ENCODE measurements at regions of chr7 and their contacts with region 1.

Region 1: DNA sequence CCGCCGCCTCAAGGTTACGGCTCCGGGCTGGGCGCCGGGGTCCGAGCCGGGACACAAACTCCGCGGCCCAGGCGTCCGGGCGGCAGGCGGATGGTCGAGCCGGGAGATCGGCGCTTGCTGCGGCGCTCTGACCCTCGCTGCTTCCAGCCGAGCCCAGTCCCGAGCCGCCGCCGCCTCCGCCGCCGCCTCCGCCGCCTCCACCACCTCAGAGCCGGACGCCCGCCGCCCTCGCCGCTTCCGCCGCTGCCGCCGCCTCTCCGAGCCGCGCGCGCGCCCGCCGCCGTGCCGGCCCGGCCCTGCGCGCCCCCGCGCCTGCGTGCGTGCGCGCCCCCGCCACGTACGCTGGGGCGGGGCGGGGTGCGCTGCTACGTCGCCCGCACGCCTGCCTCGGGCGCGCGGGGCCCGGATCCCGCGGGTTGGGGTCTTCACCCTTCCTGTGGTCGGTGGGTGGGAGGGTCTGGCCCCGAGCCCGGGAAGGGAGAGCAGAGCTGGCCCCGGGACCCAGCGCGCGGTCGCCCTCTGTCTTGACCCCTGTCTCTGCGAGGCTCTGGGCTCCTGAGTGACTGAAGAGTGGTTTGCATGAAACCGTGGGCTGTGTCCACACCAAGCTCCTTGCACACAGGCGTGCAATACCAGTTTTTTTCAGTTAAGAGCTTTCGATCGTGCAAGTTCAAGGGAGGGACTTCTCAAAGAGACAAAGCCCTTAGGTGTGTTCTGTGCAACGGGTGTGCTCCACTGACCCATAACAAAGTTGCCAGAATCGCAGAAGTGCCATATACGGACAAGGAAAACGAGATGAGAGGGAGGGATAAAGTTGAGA is at the start of gene SMURF1:
- DNase-seq: peak; percentile 75 to 86
- ATAC-seq: peak; percentile 72 to 79 (median 78)
- H3K4me3 ChIP-seq: peak within 1 kb of the TSS; percentile 99
- H3K27ac ChIP-seq: peak within 1 kb of the TSS; percentile 93
- H3K4me1 ChIP-seq: peaks cover 19% of the 10 kb centered on the region
- H3K27me3 ChIP-seq: no peaks in the 10 kb centered on the region
- CTCF ChIP-seq: no peak
- total RNA-seq, gene SMURF1: 8.8 to 16.9 (median 13.2) TPM

Region 2: DNA sequence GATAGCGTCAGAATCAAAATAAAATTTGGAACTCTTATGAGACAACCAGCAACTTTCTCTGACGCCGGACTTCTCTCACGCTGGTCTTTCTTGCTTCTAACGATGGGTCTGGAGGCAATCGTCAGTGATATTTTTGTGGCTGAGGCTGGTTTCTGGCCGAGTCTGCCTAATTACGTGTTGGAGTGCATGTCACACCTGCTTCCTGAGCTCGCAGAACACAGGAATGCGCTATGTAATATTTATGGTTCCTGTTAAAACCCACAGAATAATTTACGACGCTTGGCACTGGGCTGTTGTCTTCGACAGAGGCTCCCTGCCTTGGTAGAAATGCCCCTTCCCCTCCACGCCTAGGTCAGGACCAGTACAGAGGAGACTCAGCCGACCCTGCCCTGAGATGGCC is 462.1 kb before region 1 on chr7:
- intact Hi-C with region 1: no loop called
- DNase-seq: no peak
- ATAC-seq: no peak
- H3K4me3 ChIP-seq: no peak overlapping the region
- H3K27ac ChIP-seq: no peak overlapping the region
- H3K4me1 ChIP-seq: no peaks in the 10 kb centered on the region
- H3K27me3 ChIP-seq: no peaks in the 10 kb centered on the region
- CTCF ChIP-seq: no peak

Region 3: DNA sequence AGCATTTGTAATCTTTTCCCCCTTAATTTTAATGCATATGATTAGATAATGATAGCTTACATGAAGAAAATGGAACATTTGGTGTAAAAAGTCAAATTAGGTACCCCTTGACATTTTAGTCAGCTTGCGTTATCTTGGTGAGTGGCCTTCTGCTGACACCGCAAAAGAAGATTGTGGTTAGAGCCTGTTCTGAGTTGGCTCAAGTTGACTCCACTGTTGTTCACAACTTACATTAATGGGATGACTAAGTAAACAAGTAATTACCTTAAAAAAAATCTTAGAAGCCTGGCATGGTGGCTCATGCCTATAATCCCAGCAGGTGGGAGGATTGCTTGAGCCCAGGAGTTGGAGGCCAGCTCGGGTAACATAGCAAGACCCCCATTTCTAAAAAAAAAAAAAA is 241.5 kb before region 1 on chr7:
- intact Hi-C with region 1: no loop called
- DNase-seq: no peak
- ATAC-seq: no peak
- H3K4me3 ChIP-seq: no peak overlapping the region
- H3K27ac ChIP-seq: no peak overlapping the region
- H3K4me1 ChIP-seq: peaks cover 5% of the 10 kb centered on the region
- H3K27me3 ChIP-seq: no peaks in the 10 kb centered on the region
- CTCF ChIP-seq: no peak

Region 4: GRCh38 chr7:99029466-99030435 is 114.3 kb before region 1 on chr7:
- intact Hi-C with region 1: no loop called
- DNase-seq: no peak
- ATAC-seq: no peak
- H3K4me3 ChIP-seq: no peak overlapping the region
- H3K27ac ChIP-seq: peak overlapping the region; percentile 60
- H3K4me1 ChIP-seq: no peaks in the 10 kb centered on the region
- H3K27me3 ChIP-seq: no peaks in the 10 kb centered on the region
- CTCF ChIP-seq: no peak

Region 5: DNA sequence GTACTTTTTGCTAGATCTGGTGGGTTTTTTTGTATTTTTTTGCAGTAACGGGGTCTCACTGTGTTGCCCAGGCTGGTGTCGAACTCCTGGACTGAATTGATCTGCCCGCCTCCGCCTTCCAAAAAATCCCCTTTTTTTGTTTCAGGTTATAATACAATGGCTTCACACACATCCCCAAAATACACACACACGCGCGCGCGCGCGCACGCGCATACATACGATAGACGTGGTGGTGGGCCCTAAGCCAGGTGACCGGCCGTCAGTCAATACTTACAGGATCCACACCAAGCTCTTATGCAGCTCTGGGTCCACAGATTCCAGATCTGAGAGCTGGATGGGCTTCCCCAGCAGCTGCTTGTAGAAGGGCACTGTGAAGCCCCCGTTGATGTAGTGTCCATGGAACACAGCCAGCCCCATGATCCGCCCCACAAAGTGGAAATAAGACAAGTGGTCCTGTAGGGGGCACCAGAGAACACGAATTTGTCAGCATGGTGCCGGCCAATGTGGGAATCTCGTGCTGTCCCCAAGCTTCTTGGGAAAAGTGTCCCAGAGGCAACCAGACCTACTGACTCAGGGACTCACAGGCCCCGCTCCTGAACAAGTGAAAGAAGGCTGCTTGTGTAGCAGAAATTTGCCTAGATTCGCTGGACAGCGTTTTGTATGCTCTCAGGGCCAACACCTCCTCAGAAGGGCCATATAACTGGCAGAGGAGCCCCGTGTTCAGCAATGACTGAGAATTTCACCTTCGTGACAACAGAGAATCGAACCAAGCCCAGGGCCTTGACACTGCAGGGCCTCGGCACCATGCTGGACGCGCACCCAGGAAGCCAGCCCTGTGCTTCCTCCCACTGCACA is 103.7 kb before region 1 on chr7:
- intact Hi-C with region 1: loop called in 1 of 2 experiments (anchors 5 kb)
- DNase-seq: peak; percentile 77 to 87
- ATAC-seq: peak; percentile 79 to 91 (median 86)
- H3K4me3 ChIP-seq: no peak overlapping the region
- H3K27ac ChIP-seq: peak overlapping the region; percentile 47
- H3K4me1 ChIP-seq: no peaks in the 10 kb centered on the region
- H3K27me3 ChIP-seq: no peaks in the 10 kb centered on the region
- CTCF ChIP-seq: peak; percentile 78

Region 6: GRCh38 chr7:99079104-99079503 is 65.0 kb before region 1 on chr7:
- intact Hi-C with region 1: loop called in 1 of 2 experiments (anchors 5 kb)
- DNase-seq: no peak
- ATAC-seq: peak in 3 of 4 donors; percentile 39 to 74 (median 67)
- H3K4me3 ChIP-seq: no peak overlapping the region
- H3K27ac ChIP-seq: no peak overlapping the region
- H3K4me1 ChIP-seq: peaks cover 15% of the 10 kb centered on the region
- H3K27me3 ChIP-seq: no peaks in the 10 kb centered on the region
- CTCF ChIP-seq: no peak

Region 7: GRCh38 chr7:99170730-99171074 is 26.6 kb after region 1 on chr7:
- intact Hi-C with region 1: no loop called
- DNase-seq: no peak
- ATAC-seq: no peak
- H3K4me3 ChIP-seq: no peak overlapping the region
- H3K27ac ChIP-seq: no peak overlapping the region
- H3K4me1 ChIP-seq: no peaks in the 10 kb centered on the region
- H3K27me3 ChIP-seq: no peaks in the 10 kb centered on the region
- CTCF ChIP-seq: no peak

Region 8: DNA sequence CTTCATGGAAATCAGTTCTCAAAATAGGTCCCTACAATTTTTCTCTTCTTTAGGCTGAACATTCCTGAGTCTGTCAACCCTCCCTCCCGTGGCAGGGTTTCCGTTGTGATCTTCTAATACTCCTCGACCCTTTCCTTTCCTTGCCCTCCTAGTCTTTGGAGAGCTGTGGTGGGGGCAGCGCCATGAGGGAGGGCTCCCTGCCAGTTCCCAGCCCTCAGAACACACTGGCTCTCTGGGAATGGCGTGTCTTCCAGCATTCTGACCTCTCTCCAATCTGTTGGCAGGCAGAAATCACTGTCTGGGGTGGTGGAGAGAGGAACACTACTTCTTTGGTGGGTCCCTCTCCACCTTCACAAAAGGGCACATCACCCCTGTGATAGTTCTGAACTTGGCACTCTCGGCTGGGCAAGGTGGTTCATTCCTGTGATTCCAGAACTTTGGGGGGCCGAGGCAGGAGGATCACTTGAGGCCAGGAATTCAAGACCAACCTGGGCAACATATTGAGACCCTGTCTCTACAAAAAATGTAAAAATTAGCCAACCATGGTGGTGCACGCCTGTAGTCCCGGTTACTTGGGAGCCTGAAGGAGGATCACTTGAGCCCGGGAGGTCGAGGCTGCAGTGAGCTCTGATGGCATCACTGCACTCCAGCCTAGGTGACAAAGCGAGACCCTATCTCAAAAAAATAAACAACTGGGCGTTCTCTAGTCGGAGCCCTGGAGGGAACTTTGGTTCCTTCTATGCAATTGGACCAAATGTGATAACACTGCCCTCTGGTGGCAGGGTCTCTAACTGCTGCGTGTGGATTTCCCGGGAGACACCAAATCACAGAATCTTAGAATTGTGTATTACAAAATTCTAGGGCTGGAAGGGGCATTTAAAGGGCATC is 168.5 kb after region 1 on chr7:
- intact Hi-C with region 1: loop called in 1 of 2 experiments (anchors 10 kb)
- DNase-seq: peak; percentile 60 to 77
- ATAC-seq: peak; percentile 68 to 88 (median 74)
- H3K4me3 ChIP-seq: no peak overlapping the region
- H3K27ac ChIP-seq: no peak overlapping the region
- H3K4me1 ChIP-seq: no peaks in the 10 kb centered on the region
- H3K27me3 ChIP-seq: no peaks in the 10 kb centered on the region
- CTCF ChIP-seq: peak; percentile 92